ENCODE measurements at regions of chr15 and their contacts with region 1.

Region 1: GRCh38 chr15:75597667-75598341 is 18.7 kb upstream of the PTPN9 start:
- DNase-seq: no peak

Region 2: DNA sequence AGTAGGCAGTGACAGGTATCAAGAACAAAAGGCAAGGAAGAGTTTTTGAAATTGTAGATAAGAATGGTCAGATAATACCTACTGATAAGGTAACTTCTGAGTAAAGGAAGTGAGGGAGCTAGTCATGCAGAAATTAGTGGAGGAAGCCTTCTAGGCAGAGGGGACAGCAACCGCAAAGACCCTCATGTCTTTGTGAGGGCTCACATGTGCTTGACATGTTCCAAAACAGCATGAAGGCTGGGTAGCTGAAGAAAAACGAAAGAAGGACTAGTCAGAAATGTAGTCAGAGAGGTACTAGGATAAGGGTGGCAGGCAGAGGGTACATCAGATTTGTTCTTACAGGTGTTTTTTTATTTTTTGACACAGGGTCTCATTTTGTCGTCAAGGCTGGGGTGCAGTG is 151.7 kb before region 1 on chr15:
- in situ Hi-C with region 1: loop called (anchors 10 kb)
- DNase-seq: no peak

Region 3: DNA sequence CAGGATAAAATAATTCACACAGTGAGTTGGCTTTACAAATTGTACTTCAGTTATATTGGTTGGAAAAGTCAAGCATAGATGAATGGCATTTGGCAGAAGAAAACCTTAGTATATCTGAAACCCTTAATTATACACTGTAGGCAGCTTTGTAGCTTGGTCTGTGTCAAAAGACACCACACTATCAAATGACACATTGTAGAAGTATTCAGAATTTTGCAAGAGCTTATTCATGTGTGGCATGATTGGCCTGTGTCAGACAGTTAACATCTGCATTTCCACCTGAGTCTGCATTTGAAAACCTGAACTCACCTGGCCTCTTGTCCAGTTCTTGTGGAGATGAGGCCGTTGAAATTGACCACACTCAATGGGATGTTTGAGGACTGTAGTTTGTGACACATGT is 475.8 kb after region 1 on chr15:
- in situ Hi-C with region 1: no loop called
- DNase-seq: peak; percentile 16